ENCODE measurements at regions of chr15 and their contacts with region 1.

Region 1: GRCh38 chr15:40367686-40368611 is 9.9 kb downstream of the DISP2 start:
- DNase-seq: no peak
- H3K4me3 ChIP-seq: peak overlapping the region; percentile 44
- CTCF ChIP-seq: peak; percentile 85

Region 2: DNA sequence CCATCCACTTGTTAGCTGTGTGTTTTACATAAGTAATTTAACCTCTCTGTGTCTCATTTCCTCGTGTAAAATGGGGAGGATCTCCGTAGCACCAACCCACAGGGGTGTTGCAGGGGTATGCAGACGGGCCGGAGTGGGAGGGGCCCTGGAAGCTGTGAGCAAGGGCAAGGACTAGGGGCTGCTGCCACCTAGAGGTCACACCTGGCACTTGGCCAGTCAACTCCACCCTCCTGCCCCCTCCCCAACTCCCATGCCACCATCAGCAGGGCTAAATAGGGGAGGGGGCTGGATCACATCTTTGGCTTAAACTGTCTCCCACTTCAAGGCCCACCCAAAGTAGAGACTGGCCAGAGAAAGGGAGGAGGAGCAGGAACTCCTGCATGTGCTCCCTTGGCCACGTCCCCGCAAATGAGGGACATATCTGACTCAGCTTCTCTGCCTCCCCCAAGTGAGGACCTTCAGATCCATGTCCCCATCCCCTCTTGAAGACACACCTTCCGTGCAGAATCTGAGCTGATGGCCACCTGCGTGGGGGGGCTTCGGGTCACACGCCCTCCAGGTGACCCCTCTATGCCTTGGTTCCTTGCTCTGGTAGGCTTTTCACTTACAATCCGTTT is 29.8 kb before region 1 on chr15:
- CTCF ChIA-PET with region 1: interaction called, 138 read pairs
- POLR2A ChIA-PET with region 1: no interaction called
- DNase-seq: no peak
- H3K4me3 ChIP-seq: peak overlapping the region; percentile 48
- CTCF ChIP-seq: peak; percentile 84

Region 3: GRCh38 chr15:40357723-40358470 is 10.1 kb before region 1 on chr15 and contains the start of gene DISP2:
- CTCF ChIA-PET with region 1: interaction called, 89 read pairs
- POLR2A ChIA-PET with region 1: no interaction called
- DNase-seq: no peak
- H3K4me3 ChIP-seq: peak within 1 kb of the TSS; percentile 61
- CTCF ChIP-seq: no peak

Region 4: DNA sequence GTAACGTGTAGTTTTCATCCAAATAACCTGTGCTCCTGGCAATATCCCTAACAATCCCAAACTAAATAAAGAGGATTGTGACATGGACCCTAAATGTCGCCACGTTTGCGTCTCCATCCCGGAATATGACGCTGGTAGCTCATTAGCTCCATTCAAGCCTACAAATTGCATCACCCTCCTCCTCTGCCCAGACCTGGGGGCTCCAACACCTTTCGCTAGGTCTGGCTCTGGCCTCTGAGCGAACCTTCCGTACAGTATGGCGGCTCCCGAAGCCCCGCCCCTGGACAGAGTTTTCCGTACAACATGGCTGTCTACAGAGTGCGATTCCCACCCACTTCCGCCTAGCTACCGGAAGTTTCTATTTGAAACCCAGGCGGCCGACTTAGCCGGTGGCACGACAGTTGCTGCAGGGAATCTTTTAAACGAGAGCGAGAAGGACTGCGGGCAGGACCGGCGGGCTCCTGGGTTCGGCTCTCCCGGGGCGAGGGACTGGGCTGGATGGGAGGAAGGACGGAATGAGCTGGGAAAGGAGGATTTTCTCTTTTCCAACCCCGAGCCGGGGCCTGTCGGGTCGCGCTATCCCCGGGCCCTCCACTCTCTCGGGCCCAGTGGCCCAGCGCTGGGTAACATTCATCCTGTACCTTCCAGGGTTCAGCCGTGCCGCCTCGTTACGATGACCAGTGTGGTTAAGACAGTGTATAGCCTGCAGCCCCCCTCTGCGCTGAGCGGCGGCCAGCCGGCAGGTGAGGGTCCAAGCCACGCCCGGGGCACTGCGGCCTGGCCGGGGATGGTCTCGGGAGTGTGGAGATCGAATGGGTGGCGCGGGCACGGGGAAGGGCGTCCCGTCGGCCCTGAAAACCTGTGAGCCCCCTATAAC is 14.9 kb after region 1 on chr15 and contains the start of gene KNSTRN:
- CTCF ChIA-PET with region 1: interaction called, 66 read pairs
- POLR2A ChIA-PET with region 1: no interaction called
- DNase-seq: peak; percentile 67
- H3K4me3 ChIP-seq: peak within 1 kb of the TSS; percentile 89
- CTCF ChIP-seq: no peak

Region 5: DNA sequence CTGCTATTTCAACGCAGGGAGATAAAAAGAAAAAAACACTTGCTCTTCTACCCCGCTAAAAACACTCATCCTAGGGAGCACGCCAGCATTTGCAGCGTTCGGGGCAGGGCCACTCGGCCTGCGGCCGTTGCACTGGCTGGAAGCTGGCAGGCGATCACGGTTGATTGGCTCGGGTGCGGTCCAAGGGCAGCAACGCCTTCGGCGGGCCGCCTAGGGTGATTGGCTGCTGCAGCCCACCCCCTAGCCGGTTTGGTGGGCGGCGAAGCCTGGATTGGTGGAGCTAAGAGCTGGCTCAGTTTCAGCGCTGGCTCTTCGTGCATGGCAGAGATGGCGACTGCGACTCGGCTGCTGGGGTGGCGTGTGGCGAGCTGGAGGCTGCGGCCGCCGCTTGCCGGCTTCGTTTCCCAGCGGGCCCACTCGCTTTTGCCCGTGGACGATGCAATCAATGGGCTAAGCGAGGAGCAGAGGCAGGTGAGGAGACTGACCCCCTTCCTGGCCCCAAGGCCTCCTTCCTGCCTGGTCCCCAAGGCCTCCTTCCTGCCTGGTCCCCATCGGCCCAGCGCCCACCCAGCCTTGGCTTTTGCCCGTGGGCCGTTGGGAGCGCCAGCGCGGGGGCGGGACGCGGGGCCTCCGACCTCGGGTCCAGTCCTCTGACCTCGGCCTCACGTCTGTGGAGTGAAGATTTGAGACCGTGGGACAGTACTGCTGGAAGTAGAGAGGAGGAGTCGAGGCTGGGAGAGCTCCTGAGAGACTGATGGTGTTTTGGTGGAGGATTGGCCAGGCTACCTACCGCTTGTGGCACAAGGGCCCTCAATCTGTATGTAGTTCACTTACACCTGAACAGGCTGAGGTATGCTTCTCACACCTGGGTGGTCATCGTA is 37.8 kb after region 1 on chr15 and contains the start of gene IVD:
- CTCF ChIA-PET with region 1: interaction called, 20 read pairs
- POLR2A ChIA-PET with region 1: no interaction called
- DNase-seq: peak; percentile 71
- H3K4me3 ChIP-seq: peak within 1 kb of the TSS; percentile 93
- CTCF ChIP-seq: no peak

Region 6: GRCh38 chr15:40421246-40422157 is 53.6 kb after region 1 on chr15:
- CTCF ChIA-PET with region 1: interaction called, 73 read pairs
- POLR2A ChIA-PET with region 1: no interaction called
- DNase-seq: no peak
- H3K4me3 ChIP-seq: no peak overlapping the region; the same call in 1 of the 2 replicates
- CTCF ChIP-seq: peak; percentile 97